ENCODE measurements at regions of chr10 and their contacts with region 1.

Region 1: DNA sequence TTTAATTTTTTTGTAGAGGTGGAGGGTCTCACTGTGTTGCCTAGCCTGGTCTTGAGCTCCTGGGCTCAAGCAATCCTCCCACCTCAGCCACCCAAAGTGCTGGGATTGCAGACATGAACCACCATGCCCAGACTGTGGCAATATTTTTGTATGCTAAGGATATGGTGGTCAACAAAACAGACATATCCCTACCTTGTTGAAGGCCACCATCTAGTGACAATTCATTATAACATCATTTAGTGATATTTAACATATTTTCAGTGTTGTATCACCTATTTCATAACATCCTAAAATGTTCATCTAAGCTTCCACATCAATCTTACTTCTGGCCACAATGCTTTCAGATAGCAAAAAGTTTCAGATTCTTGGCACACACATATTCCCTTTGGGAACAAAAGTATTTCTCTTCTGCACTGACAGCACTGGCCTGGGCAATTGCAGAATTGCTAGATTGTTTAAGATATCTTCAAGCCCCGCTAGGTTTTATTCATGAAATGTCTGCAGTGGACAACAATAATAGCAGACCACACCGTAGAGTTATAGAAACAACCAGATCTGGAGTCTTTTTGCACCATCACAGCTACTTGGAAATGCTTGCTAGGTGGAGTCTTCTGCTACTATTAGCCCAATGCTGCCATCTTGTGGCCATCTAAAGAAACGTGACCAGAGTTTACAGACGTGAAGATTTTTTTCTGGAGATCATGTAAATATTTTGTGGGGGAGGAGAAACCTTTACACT is 58.4 kb downstream of the DNAJC12 start:
- DNase-seq: peak; percentile 82
- H3K4me3 Mint-ChIP-seq: no peak overlapping the region
- H3K27ac Mint-ChIP-seq: no peak overlapping the region
- H3K4me1 Mint-ChIP-seq: peaks cover 34% of the 10 kb centered on the region
- H3K27me3 Mint-ChIP-seq: peaks cover 3% of the 10 kb centered on the region

Region 2: DNA sequence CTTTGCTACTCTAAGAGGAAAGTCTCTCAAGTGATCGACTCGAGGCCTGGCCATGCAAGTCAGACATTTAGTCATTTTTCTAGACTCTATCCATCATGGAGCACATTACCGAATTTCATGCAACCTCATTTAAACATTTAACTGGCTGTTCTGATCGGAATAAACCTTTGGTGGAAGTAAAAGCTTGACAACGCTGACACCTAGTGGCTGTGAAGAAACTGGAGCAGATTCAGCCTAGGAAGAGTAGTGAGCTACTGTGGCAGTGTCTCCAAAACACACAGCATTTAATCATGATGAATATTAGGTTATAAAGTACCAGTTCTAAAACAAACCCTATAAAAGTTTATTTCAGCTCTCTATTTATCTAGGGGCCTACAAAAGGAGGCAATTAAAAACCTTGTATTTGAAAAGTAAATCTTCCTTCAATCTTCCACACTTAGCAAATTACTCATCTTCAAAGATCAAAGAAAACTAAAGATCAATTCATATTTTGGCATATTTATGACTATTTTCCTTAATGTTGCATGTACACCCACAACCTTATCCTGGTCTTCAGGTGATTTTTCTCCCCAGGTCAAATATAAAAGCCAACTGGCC is 258.6 kb before region 1 on chr10:
- CTCF ChIA-PET with region 1: interaction called, 27 read pairs
- DNase-seq: peak; percentile 49
- H3K4me3 Mint-ChIP-seq: no peak overlapping the region
- H3K27ac Mint-ChIP-seq: no peak overlapping the region
- H3K4me1 Mint-ChIP-seq: no peaks in the 10 kb centered on the region
- H3K27me3 Mint-ChIP-seq: no peaks in the 10 kb centered on the region

Region 3: GRCh38 chr10:67666416-67667034 is 113.1 kb before region 1 on chr10:
- CTCF ChIA-PET with region 1: interaction called, 64 read pairs
- DNase-seq: no peak
- H3K4me3 Mint-ChIP-seq: no peak overlapping the region
- H3K27ac Mint-ChIP-seq: no peak overlapping the region
- H3K4me1 Mint-ChIP-seq: no peaks in the 10 kb centered on the region
- H3K27me3 Mint-ChIP-seq: no peaks in the 10 kb centered on the region

Region 4: DNA sequence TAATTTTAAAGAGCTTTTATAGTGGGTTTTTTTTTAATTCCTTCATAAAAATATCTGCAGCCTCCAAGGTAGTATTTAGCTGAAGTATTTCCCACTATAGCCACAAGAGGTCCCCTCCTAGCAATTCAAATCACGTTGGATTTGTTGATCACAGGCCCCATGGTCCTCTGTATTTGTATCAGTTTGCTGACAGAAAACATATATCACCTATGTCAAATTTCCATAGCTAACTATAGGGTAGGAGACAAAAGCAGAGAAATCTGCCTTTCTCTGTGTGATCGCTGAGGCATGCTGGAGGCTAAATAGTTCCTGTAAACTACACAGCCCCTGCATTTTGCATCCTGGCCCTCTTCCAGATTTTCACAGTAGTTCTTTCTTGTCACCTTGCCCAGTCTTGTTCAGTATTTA is 81.9 kb before region 1 on chr10:
- CTCF ChIA-PET with region 1: interaction called, 195 read pairs
- DNase-seq: peak; percentile 34
- H3K4me3 Mint-ChIP-seq: no peak overlapping the region
- H3K27ac Mint-ChIP-seq: no peak overlapping the region
- H3K4me1 Mint-ChIP-seq: peaks cover 12% of the 10 kb centered on the region
- H3K27me3 Mint-ChIP-seq: peaks cover 23% of the 10 kb centered on the region

Region 5: DNA sequence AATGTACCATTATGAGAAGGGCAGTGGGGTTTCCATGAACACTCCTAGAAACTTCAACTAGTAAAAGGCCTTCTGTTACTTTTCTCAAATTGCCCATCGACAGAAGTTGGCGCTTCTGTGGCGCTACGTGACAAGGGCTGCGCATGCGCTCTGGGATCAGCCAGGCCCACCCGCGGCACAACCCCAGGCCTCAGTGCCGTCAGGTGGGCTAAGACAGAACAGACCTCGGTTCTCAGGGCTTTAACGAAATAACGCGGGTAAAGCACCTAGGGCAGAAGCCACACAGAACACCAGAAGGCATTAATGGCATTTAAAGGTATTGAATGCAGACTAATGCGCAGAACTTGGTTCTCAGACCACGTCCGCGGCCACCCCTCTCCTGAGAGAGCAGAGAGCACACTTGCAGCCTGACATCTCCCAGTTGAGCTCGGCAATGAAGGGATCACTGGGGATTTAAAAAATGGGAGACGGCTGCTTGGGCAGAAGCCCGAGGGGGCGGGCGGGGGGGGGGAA is 16.1 kb before region 1 on chr10:
- CTCF ChIA-PET with region 1: interaction called, 14 read pairs
- DNase-seq: peak; percentile 76
- H3K4me3 Mint-ChIP-seq: peak overlapping the region; percentile 77
- H3K27ac Mint-ChIP-seq: peak overlapping the region; percentile 94
- H3K4me1 Mint-ChIP-seq: peaks cover 18% of the 10 kb centered on the region
- H3K27me3 Mint-ChIP-seq: peaks cover 8% of the 10 kb centered on the region

Region 6: DNA sequence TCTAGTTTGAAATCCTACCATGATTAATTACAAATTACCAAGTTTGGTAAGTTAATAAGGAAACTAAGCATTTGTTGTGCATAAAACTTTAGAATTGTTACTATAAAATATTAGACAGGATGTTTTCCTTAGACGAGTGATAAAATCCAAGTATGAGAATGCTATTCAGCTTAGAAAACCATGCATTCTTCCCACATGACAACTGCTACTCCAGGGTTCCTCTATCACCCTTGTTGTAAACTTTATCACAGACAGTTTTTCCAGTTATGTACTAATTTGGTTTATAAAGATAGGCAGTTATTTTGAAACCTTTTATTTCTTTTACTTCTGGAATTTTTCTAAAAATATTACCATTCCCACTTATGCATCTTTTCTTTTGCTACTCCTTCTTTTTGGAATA is 156.8 kb after region 1 on chr10:
- CTCF ChIA-PET with region 1: no interaction called
- DNase-seq: no peak
- H3K4me3 Mint-ChIP-seq: no peak overlapping the region
- H3K27ac Mint-ChIP-seq: no peak overlapping the region
- H3K4me1 Mint-ChIP-seq: no peaks in the 10 kb centered on the region
- H3K27me3 Mint-ChIP-seq: no peaks in the 10 kb centered on the region